PC-3 (cell line): ENCODE measurements at regions of chr9 and their contacts with region 1.

Region 1: GRCh38 chr9:12813960-12814876 is 39.4 kb downstream of the LURAP1L start:
- DNase-seq: peak; percentile 93
- ATAC-seq: peak; percentile 62
- H3K4me3 ChIP-seq: peak overlapping the region; percentile 35
- H3K27ac ChIP-seq: peak overlapping the region; percentile 100
- H3K4me1 ChIP-seq: peaks cover 65% of the 10 kb centered on the region
- H3K27me3 ChIP-seq: no peaks in the 10 kb centered on the region
- CTCF ChIP-seq: no peak

Region 2: DNA sequence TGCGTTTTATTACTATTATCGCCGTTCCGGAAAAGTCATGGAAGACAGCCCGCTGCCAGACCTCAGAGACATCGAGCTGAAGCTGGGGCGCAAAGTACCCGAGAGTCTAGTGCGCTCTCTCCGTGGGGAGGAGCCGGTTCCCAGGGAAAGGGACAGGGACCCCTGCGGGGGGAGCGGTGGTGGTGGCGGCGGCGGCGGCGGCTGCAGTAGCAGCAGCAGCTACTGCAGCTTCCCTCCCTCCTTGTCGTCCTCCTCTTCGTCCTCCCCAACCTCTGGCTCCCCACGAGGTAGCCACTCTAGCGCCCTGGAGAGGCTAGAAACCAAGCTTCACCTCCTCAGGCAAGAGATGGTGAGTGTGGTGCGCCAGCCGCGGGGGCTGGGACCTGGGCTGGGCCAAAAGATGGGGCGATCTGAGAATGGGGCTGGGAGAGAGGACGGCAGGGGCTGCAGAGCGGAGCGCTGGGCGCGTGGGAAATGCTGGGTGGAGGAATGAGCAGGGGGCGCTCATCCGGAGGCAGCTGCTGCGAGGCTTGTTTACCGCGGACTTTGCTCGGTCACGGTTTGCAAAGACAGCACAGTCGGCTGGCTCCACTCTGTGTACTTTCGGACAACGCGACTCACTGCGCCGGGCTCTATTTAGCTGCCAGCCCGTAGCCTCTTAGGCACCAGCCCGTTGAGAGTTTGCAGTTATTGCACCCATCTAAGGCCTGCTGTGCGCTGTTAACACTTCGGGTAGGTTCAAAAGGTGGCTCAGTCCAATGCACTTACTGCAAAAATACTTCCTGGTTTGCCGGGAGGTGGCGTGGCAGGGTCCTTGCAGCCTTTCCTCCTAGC is 38.3 kb before region 1 on chr9:
- CTCF ChIA-PET with region 1: interaction called, 9 read pairs
- POLR2A ChIA-PET with region 1: interaction called, 48 read pairs
- intact Hi-C with region 1: loop called (anchors 1 kb)
- DNase-seq: peak; percentile 74
- ATAC-seq: peak; percentile 76
- H3K4me3 ChIP-seq: peak overlapping the region; percentile 86
- H3K27ac ChIP-seq: peak overlapping the region; percentile 92
- H3K4me1 ChIP-seq: peaks cover 25% of the 10 kb centered on the region
- H3K27me3 ChIP-seq: no peaks in the 10 kb centered on the region
- CTCF ChIP-seq: peak; percentile 59

Region 3: GRCh38 chr9:12784461-12785259 is 29.6 kb before region 1 on chr9:
- CTCF ChIA-PET with region 1: interaction called, 3 read pairs
- POLR2A ChIA-PET with region 1: interaction called, 5 read pairs
- intact Hi-C with region 1: loop called (anchors 1 kb)
- DNase-seq: peak; percentile 96
- ATAC-seq: peak; percentile 93
- H3K4me3 ChIP-seq: peak overlapping the region; percentile 60
- H3K27ac ChIP-seq: peak overlapping the region; percentile 100
- H3K4me1 ChIP-seq: peaks cover 34% of the 10 kb centered on the region
- H3K27me3 ChIP-seq: no peaks in the 10 kb centered on the region
- CTCF ChIP-seq: no peak

Region 4: DNA sequence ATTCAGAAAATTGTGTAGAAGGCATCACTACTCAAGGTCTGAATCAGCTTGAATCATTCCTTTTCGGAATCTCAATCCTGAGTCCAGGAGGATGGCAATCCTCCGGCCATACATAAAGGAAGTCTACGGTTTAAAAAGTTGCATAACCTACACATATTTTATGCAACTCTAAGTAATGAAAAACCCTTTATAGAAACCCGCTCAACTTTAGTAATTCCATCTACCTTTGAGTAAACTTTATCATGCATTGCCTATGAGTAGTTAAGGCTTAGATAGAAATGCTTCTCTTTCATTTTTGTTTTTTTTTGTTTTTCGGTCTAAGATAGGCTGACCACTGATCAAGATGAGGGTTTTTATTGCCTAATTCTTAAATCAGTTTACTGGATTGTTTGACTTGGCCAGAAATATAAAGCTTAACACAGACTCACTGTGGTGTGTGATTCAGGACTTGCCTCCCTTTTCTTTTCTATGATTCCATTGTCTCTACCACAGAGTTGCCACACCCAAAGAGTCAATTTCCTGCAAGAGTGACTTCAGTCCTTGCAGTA is 45.6 kb after region 1 on chr9:
- CTCF ChIA-PET with region 1: interaction called, 9 read pairs
- POLR2A ChIA-PET with region 1: no interaction called
- intact Hi-C with region 1: loop called (anchors 1 kb)
- DNase-seq: peak; percentile 90
- ATAC-seq: peak; percentile 95
- H3K4me3 ChIP-seq: peak overlapping the region; percentile 56
- H3K27ac ChIP-seq: peak overlapping the region; percentile 100
- H3K4me1 ChIP-seq: peaks cover 34% of the 10 kb centered on the region
- H3K27me3 ChIP-seq: no peaks in the 10 kb centered on the region
- CTCF ChIP-seq: no peak

Region 5: GRCh38 chr9:13082796-13083195 is 268.6 kb after region 1 on chr9:
- CTCF ChIA-PET with region 1: no interaction called
- POLR2A ChIA-PET with region 1: no interaction called
- intact Hi-C with region 1: no loop called
- DNase-seq: peak; percentile 92
- ATAC-seq: peak; percentile 75
- H3K4me3 ChIP-seq: peak overlapping the region; percentile 31; the same call in 1 of the 2 replicates
- H3K27ac ChIP-seq: peak overlapping the region; percentile 88
- H3K4me1 ChIP-seq: peaks cover 28% of the 10 kb centered on the region
- H3K27me3 ChIP-seq: no peaks in the 10 kb centered on the region
- CTCF ChIP-seq: no peak

Region 6: GRCh38 chr9:14476961-14477360 is 1662.7 kb after region 1 on chr9:
- CTCF ChIA-PET with region 1: no interaction called
- POLR2A ChIA-PET with region 1: interaction called, 25 read pairs
- intact Hi-C with region 1: no loop called
- DNase-seq: peak; percentile 33
- ATAC-seq: peak; percentile 22; the same call in 1 of the 2 replicates
- H3K4me3 ChIP-seq: no peak overlapping the region
- H3K27ac ChIP-seq: no peak overlapping the region
- H3K4me1 ChIP-seq: peaks cover 8% of the 10 kb centered on the region; the same call in 1 of the 2 replicates
- H3K27me3 ChIP-seq: no peaks in the 10 kb centered on the region
- CTCF ChIP-seq: no peak